Activated CD4-positive, alpha-beta T cell treated with anti-CD3 and anti-CD28 coated beads, Interleukin-2, amount 10 ng/mL, durations not matched to agents 24 days and 14 days (primary cell): ENCODE measurements at regions of chr4 and their contacts with region 1.

Region 1: DNA sequence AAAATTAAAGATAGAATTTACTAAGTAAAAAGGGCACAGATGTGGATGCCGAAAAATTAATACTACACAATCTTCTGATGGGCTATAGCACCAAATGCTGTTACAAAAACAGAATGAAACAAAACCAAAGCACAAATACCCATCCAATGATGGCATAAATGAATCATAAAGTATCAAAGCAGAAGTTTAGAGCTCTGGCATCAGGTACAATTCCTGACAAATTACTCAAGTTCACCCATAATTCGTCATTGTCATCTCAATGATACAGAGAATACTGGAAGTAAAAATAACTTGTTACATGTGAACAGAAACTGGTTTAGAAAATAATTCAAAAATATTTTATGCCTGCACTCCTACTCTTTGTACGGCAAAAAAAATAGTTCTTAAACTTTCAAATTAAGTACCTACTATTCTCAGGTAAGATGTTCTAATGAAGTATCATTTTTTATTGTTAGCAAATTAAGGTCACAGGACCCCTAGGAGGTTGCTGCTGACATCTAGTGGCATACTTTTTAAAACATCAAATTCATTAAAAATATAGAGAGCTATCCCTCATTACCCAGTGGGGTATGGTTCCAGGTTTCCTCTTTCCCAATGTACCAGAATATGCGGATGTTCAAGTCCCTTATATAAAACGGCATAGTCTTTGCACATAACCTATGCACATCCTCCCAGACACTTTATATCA is 126.1 kb downstream of the INPP4B start:
- DNase-seq: peak; percentile 67
- H3K4me3 Mint-ChIP-seq: no peak overlapping the region
- H3K27ac Mint-ChIP-seq: no peak overlapping the region
- H3K4me1 Mint-ChIP-seq: peaks cover 11% of the 10 kb centered on the region
- H3K27me3 Mint-ChIP-seq: no peaks in the 10 kb centered on the region

Region 2: GRCh38 chr4:142126890-142127497 is 593.0 kb before region 1 on chr4:
- intact Hi-C with region 1: loop called (anchors 1 kb)
- DNase-seq: peak; percentile 88
- H3K4me3 Mint-ChIP-seq: no peak overlapping the region
- H3K27ac Mint-ChIP-seq: no peak overlapping the region
- H3K4me1 Mint-ChIP-seq: peaks cover 12% of the 10 kb centered on the region
- H3K27me3 Mint-ChIP-seq: no peaks in the 10 kb centered on the region

Region 3: GRCh38 chr4:142282870-142283431 is 437.0 kb before region 1 on chr4:
- intact Hi-C with region 1: loop called (anchors 2 kb)
- DNase-seq: peak; percentile 84
- H3K4me3 Mint-ChIP-seq: no peak overlapping the region
- H3K27ac Mint-ChIP-seq: no peak overlapping the region
- H3K4me1 Mint-ChIP-seq: peaks cover 10% of the 10 kb centered on the region
- H3K27me3 Mint-ChIP-seq: no peaks in the 10 kb centered on the region

Region 4: GRCh38 chr4:142703694-142704309 is 16.2 kb before region 1 on chr4:
- intact Hi-C with region 1: no loop called
- DNase-seq: peak; percentile 82
- H3K4me3 Mint-ChIP-seq: no peak overlapping the region
- H3K27ac Mint-ChIP-seq: no peak overlapping the region
- H3K4me1 Mint-ChIP-seq: peaks cover 27% of the 10 kb centered on the region
- H3K27me3 Mint-ChIP-seq: no peaks in the 10 kb centered on the region

Region 5: DNA sequence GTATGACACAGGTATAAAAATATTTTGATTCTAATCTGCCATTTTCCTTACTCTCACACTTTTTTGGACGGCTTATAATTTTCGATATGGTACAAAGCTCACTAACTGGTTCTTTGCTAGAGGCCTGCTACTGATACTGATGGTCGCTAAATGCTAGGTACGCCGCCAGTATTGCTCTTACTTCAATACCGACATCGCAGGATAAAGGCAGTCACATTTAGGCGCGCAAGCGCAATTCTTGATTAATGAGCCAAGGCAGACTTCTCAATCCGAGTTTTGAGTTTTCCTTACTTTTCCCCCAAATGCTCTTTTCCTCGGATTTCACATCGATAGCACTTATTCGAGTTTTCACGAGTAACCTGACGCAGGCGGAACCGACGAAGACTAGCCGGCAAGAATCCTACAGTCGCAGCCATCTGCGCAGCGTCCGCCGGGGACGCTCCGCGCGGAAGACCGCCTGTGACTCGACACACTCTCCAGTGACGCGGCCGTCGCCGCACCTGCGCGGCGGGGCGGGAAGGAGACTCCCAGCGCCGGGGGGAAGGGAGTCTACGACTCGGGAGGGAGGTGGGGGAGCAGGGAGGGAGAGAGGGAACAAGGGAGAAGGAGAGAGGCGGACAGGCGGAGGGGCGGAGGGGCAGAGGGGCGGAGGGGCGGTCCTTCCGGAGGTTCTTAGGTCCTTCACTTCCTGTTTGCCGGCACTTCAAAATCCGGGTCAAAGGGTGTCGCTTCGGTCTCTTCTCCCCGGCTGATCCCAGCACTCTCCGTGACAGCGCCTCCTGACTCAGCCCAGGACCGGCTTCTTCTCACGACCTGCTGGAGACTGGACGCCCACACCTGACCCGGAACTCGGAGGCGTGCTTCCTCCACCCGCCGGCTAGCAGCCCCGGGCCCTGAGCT is 464.5 kb after region 1 on chr4 and contains the start of gene USP38:
- intact Hi-C with region 1: no loop called
- DNase-seq: peak; percentile 94
- H3K4me3 Mint-ChIP-seq: peak within 1 kb of the TSS; percentile 90
- H3K27ac Mint-ChIP-seq: peak within 1 kb of the TSS; percentile 95
- H3K4me1 Mint-ChIP-seq: peaks cover 39% of the 10 kb centered on the region
- H3K27me3 Mint-ChIP-seq: no peaks in the 10 kb centered on the region
- total RNA-seq, gene USP38: 28.5 and 28.7 TPM in 2 replicates